ENCODE measurements at regions of chr20 and their contacts with region 1.

Region 1: GRCh38 chr20:25057234-25058050 is 497 bp downstream of the ACSS1 start:
- DNase-seq: peak; percentile 85 to 90 (median 86)
- ATAC-seq: peak; percentile 56 to 84 (median 80)
- H3K4me3 ChIP-seq: peak overlapping the region; percentile 65 to 96 (median 88)
- H3K27ac ChIP-seq: peak overlapping the region; percentile 91 to 100 (median 97)
- H3K4me1 ChIP-seq: peaks cover 29 to 62% (median 49%) of the 10 kb centered on the region in 12 donors
- H3K27me3 ChIP-seq: no peaks in the 10 kb centered on the region
- CTCF ChIP-seq: peak in 1 of 12 donors; percentile 14
- POLR2A ChIP-seq: peak in 1 of 2 donors; percentile 56

Region 2: DNA sequence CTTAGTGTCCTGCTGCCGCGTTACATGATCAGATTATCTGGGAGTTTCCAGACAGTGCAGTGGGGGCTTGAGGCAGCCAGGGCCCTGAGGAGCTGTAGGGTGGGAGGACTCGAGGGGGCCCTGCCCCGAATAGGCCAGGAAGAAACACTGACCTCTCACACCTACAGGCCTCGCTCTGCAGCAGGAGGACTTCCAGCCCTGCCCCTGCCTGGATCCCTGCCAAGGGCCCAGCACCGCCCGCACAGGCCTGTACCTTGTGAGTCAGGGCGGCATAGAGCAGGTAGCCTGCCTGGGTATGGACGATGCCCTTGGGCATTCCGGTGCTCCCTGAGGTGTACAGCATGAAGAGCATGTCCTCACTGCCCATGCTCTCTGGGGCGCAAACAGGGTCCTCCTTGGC is 34.8 kb before region 1 on chr20:
- intact Hi-C with region 1: loop called in 2 of 10 experiments (anchors 5 kb)
- DNase-seq: peak in 3 of 5 donors; percentile 40 to 66 (median 60)
- ATAC-seq: peak; percentile 13 to 61 (median 38)
- H3K4me3 ChIP-seq: no peak overlapping the region
- H3K27ac ChIP-seq: peak overlapping the region in 7 of 12 donors; percentile 6 to 71 (median 18)
- H3K4me1 ChIP-seq: peaks cover 0 to 69% (median 24%) of the 10 kb centered on the region in 12 donors
- H3K27me3 ChIP-seq: no peaks in the 10 kb centered on the region
- CTCF ChIP-seq: no peak
- POLR2A ChIP-seq: no peak

Region 3: DNA sequence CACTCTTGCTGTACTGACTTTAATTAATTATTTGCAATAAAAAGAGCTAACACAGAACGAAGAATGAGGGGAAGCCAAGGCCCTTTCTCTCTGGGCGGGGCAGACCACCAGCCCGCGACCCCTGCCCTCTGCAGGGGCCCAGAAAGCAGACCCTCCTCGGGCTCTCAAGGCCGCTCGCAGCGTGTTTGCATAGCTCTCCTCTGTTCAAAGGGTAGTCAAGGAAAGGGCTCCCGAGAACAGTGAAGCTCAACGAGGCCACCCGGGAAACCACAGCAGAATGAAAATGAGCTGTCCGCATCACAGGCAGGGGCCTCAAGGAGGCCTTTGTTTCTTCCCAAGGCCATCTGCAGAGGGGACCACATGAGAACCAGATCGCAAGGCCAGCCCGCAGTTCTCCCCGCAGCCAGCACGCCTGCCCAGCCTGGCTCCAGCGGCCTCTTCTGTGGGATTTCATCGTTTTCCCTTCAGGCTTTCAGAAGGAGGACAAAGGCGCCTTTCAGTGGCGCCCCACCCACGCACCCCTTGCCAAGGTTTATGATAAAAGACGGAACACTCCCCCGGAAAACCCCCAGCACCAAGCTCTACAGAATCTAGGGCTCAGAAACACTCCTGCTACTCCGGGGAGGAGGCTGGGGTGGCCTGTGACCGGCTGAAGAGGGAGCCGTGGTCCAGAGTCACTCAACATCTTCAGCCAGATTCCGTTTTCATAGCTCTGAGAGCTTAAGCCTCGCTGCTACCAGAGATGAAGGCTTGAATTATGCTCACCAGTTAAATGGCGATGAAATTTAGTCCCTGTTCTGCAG is 24.8 kb before region 1 on chr20:
- intact Hi-C with region 1: loop called in 3 of 10 experiments (anchors 2 to 5 kb)
- DNase-seq: peak in 4 of 5 donors; percentile 64 to 76 (median 72)
- ATAC-seq: peak; percentile 43 to 86 (median 72)
- H3K4me3 ChIP-seq: peak overlapping the region in 7 of 12 donors; percentile 11 to 35 (median 16)
- H3K27ac ChIP-seq: peak overlapping the region; percentile 53 to 88 (median 76)
- H3K4me1 ChIP-seq: peaks cover 19 to 77% (median 65%) of the 10 kb centered on the region in 12 donors
- H3K27me3 ChIP-seq: no peaks in the 10 kb centered on the region
- CTCF ChIP-seq: peak in 3 of 12 donors; percentile 13 to 40 (median 29)
- POLR2A ChIP-seq: no peak

Region 4: GRCh38 chr20:25042531-25043498 is 14.6 kb before region 1 on chr20:
- intact Hi-C with region 1: loop called in 3 of 10 experiments (anchors 2 kb)
- DNase-seq: peak; percentile 78 to 88 (median 84)
- ATAC-seq: peak; percentile 15 to 67 (median 42)
- H3K4me3 ChIP-seq: no peak overlapping the region
- H3K27ac ChIP-seq: peak overlapping the region; percentile 63 to 96 (median 91)
- H3K4me1 ChIP-seq: peaks cover 19 to 99% (median 93%) of the 10 kb centered on the region in 12 donors
- H3K27me3 ChIP-seq: no peaks in the 10 kb centered on the region
- CTCF ChIP-seq: no peak
- POLR2A ChIP-seq: no peak

Region 5: DNA sequence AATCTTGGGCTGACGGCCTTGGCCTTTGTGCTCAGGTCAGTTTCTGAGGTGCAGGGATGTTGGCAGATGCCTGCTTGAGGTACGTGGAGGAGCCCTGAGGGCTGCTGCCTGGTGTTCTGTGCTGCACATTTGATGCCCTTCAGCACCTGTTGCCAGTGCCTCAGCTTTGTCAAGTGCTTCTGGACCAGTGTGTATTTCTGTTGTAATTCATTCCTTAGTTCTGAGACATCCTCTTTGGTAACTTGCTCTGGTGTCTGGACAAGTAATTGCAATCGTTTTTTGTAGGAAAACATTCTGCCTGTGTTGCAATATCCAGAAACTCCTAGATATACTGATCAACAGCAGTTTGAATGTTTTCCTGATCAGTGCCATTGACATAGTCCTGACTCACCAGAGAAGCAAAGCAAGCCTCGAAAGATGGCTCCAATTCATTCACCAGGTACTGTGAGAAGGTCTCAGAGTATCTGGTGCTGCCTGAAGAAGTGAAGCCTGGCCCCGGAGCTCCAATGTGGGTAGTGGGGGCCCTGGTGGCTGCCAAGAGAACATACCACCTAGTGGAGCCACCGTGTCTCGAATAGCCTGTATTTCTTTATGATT is 612.5 kb after region 1 on chr20:
- intact Hi-C with region 1: no loop called
- DNase-seq: no peak
- ATAC-seq: no peak
- H3K4me3 ChIP-seq: no peak overlapping the region
- H3K27ac ChIP-seq: no peak overlapping the region
- H3K4me1 ChIP-seq: no peaks in the 10 kb centered on the region
- H3K27me3 ChIP-seq: no peaks in the 10 kb centered on the region
- CTCF ChIP-seq: no peak
- POLR2A ChIP-seq: no peak

Measured in heart left ventricle (tissue), 16 donors.